A673 (cell line): ENCODE measurements at regions of chr7 and their contacts with region 1.

Region 1: GRCh38 chr7:74449809-74450397 is 3.8 kb upstream of the GTF2IRD1 start:
- DNase-seq: peak; percentile 63
- H3K4me3 ChIP-seq: no peak overlapping the region
- H3K27ac ChIP-seq: no peak overlapping the region
- H3K4me1 ChIP-seq: peaks cover 6% of the 10 kb centered on the region
- H3K27me3 ChIP-seq: no peaks in the 10 kb centered on the region
- CTCF ChIP-seq: peak; percentile 90

Region 2: GRCh38 chr7:74544706-74545469 is 95.0 kb after region 1 on chr7:
- CTCF ChIA-PET with region 1: no interaction called
- POLR2A ChIA-PET with region 1: no interaction called
- intact Hi-C with region 1: loop called (anchors 2 kb)
- DNase-seq: peak; percentile 52
- H3K4me3 ChIP-seq: no peak overlapping the region
- H3K27ac ChIP-seq: no peak overlapping the region
- H3K4me1 ChIP-seq: no peaks in the 10 kb centered on the region
- H3K27me3 ChIP-seq: no peaks in the 10 kb centered on the region
- CTCF ChIP-seq: peak; percentile 62

Region 3: GRCh38 chr7:74569501-74570075 is 119.7 kb after region 1 on chr7:
- CTCF ChIA-PET with region 1: interaction called, 4 read pairs
- POLR2A ChIA-PET with region 1: no interaction called
- intact Hi-C with region 1: loop called (anchors 5 kb)
- DNase-seq: no peak
- H3K4me3 ChIP-seq: no peak overlapping the region
- H3K27ac ChIP-seq: no peak overlapping the region
- H3K4me1 ChIP-seq: no peaks in the 10 kb centered on the region
- H3K27me3 ChIP-seq: no peaks in the 10 kb centered on the region
- CTCF ChIP-seq: no peak